ENCODE measurements at regions of chr3 and their contacts with region 1.

Region 1: GRCh38 chr3:128322066-128323022 is 144.3 kb downstream of the DNAJB8 start:
- DNase-seq: peak; percentile 13 to 35
- ATAC-seq: peak; percentile 62 to 87; a peak in 4 of 6 replicates
- H3K4me3 ChIP-seq: no peak overlapping the region
- H3K27ac ChIP-seq: no peak overlapping the region
- H3K4me1 ChIP-seq: no peaks in the 10 kb centered on the region
- CTCF ChIP-seq: peak; percentile 38
- EP300 ChIP-seq: no peak
- POLR2A ChIP-seq: no peak
- RAD21 ChIP-seq: peak; percentile 29 to 42; a peak in 4 of 5 replicates

Region 2: GRCh38 chr3:128335324-128336201 is 13.2 kb after region 1 on chr3:
- CTCF ChIA-PET with region 1: interaction called, 11 read pairs
- POLR2A ChIA-PET with region 1: no interaction called
- DNase-seq: no peak
- ATAC-seq: no peak
- H3K4me3 ChIP-seq: no peak overlapping the region
- H3K27ac ChIP-seq: no peak overlapping the region
- H3K4me1 ChIP-seq: no peaks in the 10 kb centered on the region
- CTCF ChIP-seq: no peak
- EP300 ChIP-seq: no peak
- POLR2A ChIP-seq: no peak
- RAD21 ChIP-seq: no peak

Region 3: GRCh38 chr3:128353991-128354687 is 31.8 kb after region 1 on chr3:
- CTCF ChIA-PET with region 1: no interaction called
- POLR2A ChIA-PET with region 1: no interaction called
- DNase-seq: no peak
- ATAC-seq: no peak
- H3K4me3 ChIP-seq: no peak overlapping the region
- H3K27ac ChIP-seq: no peak overlapping the region
- H3K4me1 ChIP-seq: no peaks in the 10 kb centered on the region
- CTCF ChIP-seq: no peak
- EP300 ChIP-seq: no peak
- POLR2A ChIP-seq: no peak
- RAD21 ChIP-seq: no peak

Measured in A549 (cell line).